ENCODE measurements at regions of chr11 and their contacts with region 1.

Region 1: GRCh38 chr11:60970369-60970774 is 1.1 kb upstream of the CD6 start:
- DNase-seq: peak; percentile 85
- ATAC-seq: peak; percentile 43
- H3K4me3 Mint-ChIP-seq: peak overlapping the region; percentile 26
- H3K27ac Mint-ChIP-seq: peak overlapping the region; percentile 30
- H3K4me1 Mint-ChIP-seq: peaks cover 29% of the 10 kb centered on the region
- H3K27me3 Mint-ChIP-seq: peaks cover 3% of the 10 kb centered on the region

Region 2: GRCh38 chr11:61129639-61130523 is 159.5 kb after region 1 on chr11:
- POLR2A ChIA-PET with region 1: interaction called, 13 read pairs
- DNase-seq: peak; percentile 91
- ATAC-seq: peak; percentile 93
- H3K4me3 Mint-ChIP-seq: peak overlapping the region; percentile 35
- H3K27ac Mint-ChIP-seq: peak overlapping the region; percentile 60
- H3K4me1 Mint-ChIP-seq: peaks cover 13% of the 10 kb centered on the region
- H3K27me3 Mint-ChIP-seq: no peaks in the 10 kb centered on the region